Posterior cingulate gyrus (tissue), 11 donors: ENCODE measurements at regions of chr2 and their contacts with region 1.

Region 1: DNA sequence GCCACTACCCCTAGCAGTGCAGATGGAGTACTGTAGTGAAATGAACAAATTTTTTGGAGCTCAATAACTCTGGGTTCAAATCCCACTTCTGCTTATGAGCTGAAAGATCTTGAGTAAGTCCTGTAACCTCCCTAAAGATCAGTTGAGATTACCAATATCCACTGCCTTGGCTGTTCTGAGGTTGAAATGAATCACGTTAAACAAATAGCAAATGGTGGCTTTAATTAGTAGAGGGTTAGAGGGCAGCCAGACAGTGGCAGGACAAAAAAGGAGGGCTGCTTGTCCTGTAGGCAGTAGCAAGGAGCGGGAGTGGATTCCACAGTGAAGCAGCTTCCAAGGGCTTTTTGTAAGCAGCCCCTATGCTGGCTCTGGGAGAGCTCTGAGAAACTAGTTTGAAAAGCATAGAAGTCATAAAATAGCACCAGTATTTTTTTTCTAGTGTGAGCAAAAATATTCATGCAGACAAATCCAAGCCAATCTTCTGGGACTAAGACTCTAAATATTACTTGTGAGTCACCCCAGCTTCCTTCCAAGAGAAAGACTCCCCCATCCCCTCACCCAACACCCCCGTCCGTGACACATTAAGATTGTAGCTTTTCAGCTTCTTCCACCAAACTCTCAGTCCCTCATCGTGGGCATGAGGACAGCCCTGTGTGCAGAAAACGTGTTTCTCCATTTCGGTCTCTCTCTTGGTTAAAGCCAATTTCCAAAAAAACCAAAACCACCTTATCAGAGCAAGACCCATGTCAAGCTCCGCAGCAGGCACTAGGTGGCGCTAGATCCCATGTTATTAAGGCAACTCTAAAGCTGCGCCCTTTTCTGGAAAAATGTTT is 123.5 kb upstream of the LGALSL start:
- DNase-seq: peak; percentile 52 to 95 (median 76)

Region 2: GRCh38 chr2:64052468-64053241 is 277.8 kb before region 1 on chr2:
- intact Hi-C with region 1: loop called (anchors 1 kb)
- DNase-seq: no peak

Region 3: DNA sequence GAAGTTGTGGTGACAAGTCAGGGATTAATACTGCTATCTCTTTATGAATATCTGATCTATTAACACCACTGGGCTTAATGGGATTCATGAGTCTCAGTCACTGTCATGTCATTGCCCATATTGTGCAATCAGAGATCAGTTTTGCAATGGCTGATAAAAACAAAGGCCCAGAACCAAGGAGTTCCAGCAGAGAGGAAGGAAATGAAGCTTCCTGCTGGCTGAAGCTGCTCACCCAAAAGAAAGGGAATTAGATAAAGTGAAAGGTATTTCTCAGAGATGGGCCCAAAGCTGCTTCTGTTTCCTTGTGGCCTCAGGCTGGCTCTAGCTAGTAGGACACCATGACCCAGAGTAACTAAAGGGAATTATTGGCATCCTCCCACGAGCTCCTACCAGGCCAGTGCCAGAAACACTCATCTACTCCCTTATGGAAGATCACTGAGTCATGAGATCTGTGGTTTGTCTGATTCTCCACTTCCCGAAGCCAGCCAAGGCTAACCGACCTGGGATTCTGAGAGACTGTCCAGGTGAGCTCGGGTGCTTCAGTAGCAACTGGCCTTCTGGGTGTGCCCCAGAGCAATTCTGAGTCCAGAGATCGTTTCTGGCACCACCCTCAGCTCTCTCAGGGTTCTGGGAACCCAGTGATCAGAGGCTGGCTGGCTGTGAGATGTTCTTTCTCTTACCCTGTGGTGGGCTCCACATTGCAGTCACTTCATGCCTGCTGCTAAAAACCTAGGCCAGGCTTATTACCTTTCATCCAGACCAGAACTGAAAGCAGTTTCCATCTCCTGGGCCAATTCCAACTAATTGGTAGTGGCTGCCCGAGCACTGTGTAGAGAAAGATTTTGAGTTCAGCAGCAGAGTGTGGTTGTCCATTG is 56.7 kb before region 1 on chr2:
- intact Hi-C with region 1: no loop called
- DNase-seq: no peak

Region 4: DNA sequence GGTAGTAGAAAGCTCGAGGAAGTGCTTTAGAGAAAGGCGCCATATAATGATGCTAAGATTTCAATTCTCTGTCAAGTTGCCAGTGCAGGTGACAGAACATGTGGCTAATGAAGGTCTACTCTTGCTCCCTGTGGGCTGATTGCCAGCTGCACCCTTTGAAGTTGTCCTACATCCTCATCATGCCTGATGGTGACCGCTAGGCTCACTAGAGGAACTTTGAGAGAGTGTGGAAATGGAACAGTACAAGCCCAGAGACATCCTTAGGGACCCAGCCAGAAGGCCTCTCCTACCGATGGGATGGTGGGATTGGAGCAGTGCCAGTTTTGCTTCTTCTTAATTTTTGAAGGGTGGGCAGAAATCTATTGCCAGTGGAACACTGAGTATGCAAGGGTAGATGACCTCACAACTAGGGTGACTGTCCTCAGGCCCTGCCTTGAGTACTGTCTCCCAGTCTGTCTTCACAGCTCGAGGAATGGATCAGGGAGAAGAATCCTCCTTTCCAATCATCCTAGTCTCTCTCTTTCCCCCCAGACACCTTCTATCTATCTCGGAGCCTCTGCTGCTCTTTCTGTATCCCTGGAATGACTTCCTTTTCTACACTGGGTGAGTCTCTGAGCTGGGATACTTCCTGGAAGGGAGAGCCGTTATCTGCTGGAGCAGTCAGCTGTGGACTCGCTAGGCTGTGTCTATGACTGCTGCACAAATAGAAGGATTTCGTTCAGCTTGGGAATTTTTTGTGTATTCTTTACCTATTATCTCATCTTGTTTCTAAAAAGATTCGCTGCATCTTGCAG is 157.0 kb after region 1 on chr2:
- intact Hi-C with region 1: loop called (anchors 1 kb)
- DNase-seq: no peak

Region 5: GRCh38 chr2:64534363-64534762 is 203.9 kb after region 1 on chr2:
- intact Hi-C with region 1: no loop called
- DNase-seq: no peak

Region 6: GRCh38 chr2:64865073-64865830 is 534.8 kb after region 1 on chr2:
- intact Hi-C with region 1: loop called (anchors 5 kb)
- DNase-seq: peak; percentile 32 to 93 (median 60)